A673 (cell line): ENCODE measurements at regions of chr3 and their contacts with region 1.

Region 1: DNA sequence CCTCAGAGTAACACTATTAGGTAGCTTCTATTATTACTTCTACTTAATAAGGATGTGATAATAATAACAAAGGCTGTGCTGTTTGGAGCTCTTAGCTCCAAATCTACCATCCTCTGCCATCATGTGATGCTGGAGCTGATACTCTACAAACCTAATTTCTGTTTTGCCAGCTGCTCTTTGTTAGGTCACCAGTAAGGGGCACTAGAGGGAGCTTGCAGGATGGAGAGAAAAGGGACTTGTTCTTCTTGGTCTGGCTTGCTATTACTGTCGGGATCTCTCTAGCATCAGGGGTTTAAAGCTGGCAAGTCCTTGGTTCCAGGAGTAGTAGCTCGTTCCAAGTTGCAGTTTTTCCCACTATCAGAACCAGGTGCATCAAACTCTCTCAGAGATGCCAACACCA is 194.9 kb upstream of the KBTBD8 start:
- DNase-seq: peak; percentile 78
- H3K4me3 ChIP-seq: no peak overlapping the region
- H3K27ac ChIP-seq: peak overlapping the region; percentile 84
- H3K4me1 ChIP-seq: peaks cover 9% of the 10 kb centered on the region
- H3K27me3 ChIP-seq: no peaks in the 10 kb centered on the region
- CTCF ChIP-seq: peak; percentile 58

Region 2: GRCh38 chr3:66472313-66473134 is 330.7 kb before region 1 on chr3:
- CTCF ChIA-PET with region 1: interaction called, 11 read pairs
- POLR2A ChIA-PET with region 1: no interaction called
- intact Hi-C with region 1: no loop called
- DNase-seq: no peak
- H3K4me3 ChIP-seq: peak overlapping the region; percentile 3
- H3K27ac ChIP-seq: no peak overlapping the region
- H3K4me1 ChIP-seq: peaks cover 41% of the 10 kb centered on the region
- H3K27me3 ChIP-seq: no peaks in the 10 kb centered on the region
- CTCF ChIP-seq: no peak

Region 3: GRCh38 chr3:66537735-66538134 is 265.5 kb before region 1 on chr3:
- CTCF ChIA-PET with region 1: interaction called, 6 read pairs
- POLR2A ChIA-PET with region 1: interaction called, 3 read pairs
- intact Hi-C with region 1: loop called (anchors 1 kb)
- DNase-seq: no peak
- H3K4me3 ChIP-seq: no peak overlapping the region
- H3K27ac ChIP-seq: peak overlapping the region; percentile 87
- H3K4me1 ChIP-seq: peaks cover 29% of the 10 kb centered on the region
- H3K27me3 ChIP-seq: no peaks in the 10 kb centered on the region
- CTCF ChIP-seq: no peak

Region 4: DNA sequence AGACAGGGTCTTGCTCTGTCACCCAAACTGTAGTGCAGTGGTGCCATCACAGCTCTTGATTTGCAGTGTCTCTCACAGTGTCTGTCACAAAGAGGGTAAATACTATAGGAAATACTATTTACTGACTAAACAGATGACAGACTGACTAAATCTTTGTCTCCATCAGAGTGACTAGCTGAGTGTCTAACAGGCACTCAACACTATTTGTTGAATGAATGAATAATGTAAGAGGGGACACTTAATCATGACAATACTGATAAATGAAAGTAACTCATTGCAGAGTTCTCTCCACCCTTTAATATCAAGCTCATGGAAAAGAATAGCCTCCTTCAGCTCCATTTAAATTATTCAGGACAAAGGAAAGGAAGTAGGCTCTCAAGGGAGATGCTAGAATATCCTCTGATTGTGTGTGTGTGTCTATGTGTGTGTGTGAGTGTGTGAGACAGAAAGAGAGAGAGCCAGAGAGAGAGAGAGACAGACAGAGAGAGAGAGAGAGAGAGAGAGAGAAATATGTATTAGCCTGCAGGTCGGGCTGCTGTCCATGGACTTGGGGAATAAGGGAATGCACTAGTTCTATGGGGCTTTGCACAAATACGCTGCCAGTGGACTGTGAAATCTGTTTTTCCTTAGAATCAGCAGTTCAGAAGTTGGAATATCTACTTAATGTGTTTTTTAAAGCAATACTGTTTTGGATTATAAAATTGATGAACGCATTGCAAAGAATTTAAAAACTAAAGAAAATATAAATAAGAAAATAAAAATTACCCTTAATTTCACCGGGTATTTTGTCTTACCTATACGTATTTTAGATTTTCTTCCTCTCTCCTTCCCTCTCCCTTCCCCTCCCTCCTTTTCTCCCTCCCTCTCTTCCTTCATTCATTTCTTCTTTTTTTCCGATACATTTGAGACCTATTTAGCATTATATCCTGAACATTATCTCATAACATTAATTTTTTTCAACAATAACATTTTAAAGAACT is 169.5 kb before region 1 on chr3:
- CTCF ChIA-PET with region 1: no interaction called
- POLR2A ChIA-PET with region 1: no interaction called
- intact Hi-C with region 1: loop called (anchors 5 kb)
- DNase-seq: peak; percentile 75
- H3K4me3 ChIP-seq: no peak overlapping the region
- H3K27ac ChIP-seq: no peak overlapping the region
- H3K4me1 ChIP-seq: no peaks in the 10 kb centered on the region
- H3K27me3 ChIP-seq: no peaks in the 10 kb centered on the region
- CTCF ChIP-seq: no peak

Region 5: GRCh38 chr3:66910266-66911055 is 107.3 kb after region 1 on chr3:
- CTCF ChIA-PET with region 1: no interaction called
- POLR2A ChIA-PET with region 1: no interaction called
- intact Hi-C with region 1: no loop called
- DNase-seq: no peak
- H3K4me3 ChIP-seq: no peak overlapping the region
- H3K27ac ChIP-seq: no peak overlapping the region
- H3K4me1 ChIP-seq: no peaks in the 10 kb centered on the region
- H3K27me3 ChIP-seq: peaks cover 3% of the 10 kb centered on the region
- CTCF ChIP-seq: no peak

Region 6: DNA sequence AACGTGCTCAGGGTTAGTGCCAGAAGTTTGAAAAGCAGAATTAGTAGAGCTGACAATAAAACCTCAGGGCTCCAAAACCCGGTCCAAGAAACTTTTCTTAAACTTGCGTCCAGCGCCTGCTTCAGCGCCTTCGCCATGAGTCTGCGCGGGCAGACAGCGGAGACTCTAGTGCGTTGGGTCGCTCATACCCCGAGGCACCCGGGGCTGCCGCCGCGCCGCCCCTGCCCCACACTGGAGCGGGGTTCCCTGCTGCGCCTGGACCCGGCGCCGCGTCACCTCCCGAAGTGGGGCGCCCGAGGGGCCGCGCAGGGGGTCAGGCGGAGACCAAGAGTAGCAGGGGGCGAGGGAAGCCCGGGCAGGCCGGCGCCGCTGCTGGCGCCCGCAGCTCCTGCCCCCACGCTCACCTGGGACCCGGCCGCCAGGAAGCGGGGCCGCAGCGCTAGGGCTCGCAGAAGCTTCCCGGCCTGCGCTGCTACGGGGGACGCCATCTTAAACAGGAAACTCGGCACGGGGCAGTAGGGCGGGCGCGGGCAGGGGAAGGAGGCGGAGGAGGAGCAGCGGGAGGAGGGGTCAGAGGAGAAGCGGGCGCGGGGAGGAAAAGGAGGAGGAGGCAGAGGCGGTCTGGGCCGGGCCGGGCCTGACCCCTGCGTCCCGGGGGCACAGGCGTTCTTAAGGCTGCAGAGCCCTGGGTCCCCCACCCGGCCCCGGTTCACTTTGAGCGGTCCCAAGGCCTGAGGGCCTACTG is 851.1 kb after region 1 on chr3 and contains the start of gene SUCLG2:
- CTCF ChIA-PET with region 1: no interaction called
- POLR2A ChIA-PET with region 1: no interaction called
- intact Hi-C with region 1: no loop called
- DNase-seq: peak; percentile 73
- H3K4me3 ChIP-seq: peak within 1 kb of the TSS; percentile 64
- H3K27ac ChIP-seq: peak within 1 kb of the TSS; percentile 74
- H3K4me1 ChIP-seq: no peaks in the 10 kb centered on the region
- H3K27me3 ChIP-seq: no peaks in the 10 kb centered on the region
- CTCF ChIP-seq: no peak
- total RNA-seq, gene SUCLG2: 7.4 and 9.4 TPM in 2 replicates